Endothelial cell of umbilical vein (primary cell): ENCODE measurements at regions of chr20 and their contacts with region 1.

Region 1: DNA sequence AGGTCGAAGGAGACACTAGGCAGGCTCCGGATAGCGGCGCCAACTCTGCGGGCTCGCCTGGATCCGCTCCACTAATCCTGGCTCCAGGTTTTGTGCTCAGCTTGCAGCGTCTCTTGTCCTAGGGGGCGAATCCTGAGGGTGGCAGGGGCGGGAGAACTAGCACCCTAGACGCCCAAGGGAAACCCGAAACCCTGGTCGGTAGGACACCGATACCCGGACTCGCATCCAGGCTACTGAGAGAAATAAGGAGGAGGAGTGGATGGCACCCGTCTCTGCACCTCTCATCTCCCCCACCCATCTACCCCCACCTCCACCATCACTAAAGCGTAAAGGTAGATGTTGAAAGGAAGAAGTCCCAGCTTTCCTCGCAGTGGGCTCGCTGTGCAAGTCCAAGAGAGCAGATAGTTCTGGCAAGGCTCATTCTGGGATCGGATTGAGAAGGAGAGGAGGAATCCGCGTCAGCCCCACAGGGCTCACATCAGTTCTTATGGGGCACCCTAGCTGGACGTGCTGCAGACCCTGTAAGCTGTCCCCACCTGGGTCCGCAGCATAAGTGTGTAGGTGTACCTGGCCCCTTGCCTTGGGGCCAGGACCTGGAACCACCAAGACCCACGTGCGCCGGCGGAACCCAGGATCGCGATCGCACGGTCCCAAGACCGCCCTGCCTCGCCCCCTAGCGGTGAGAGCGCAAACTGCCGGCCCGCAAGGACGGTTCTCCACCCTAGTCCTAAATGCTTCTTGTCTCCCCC is 6.9 kb downstream of the SLC32A1 start:
- DNase-seq: peak; percentile 60
- H3K4me3 ChIP-seq: no peak overlapping the region
- H3K27ac ChIP-seq: no peak overlapping the region
- H3K4me1 ChIP-seq: peaks cover 6% of the 10 kb centered on the region
- H3K27me3 ChIP-seq: peaks cover 65 to 80% of the 10 kb centered on the region in 2 experiments
- CTCF ChIP-seq: peak; percentile 99
- POLR2A ChIP-seq: no peak

Region 2: GRCh38 chr20:38645980-38646858 is 84.9 kb before region 1 on chr20:
- CTCF ChIA-PET with region 1: interaction called, 18 read pairs
- POLR2A ChIA-PET with region 1: no interaction called
- dilution Hi-C with region 1: no loop called
- intact Hi-C with region 1: loop called (anchors 1 kb)
- DNase-seq: peak; percentile 64
- H3K4me3 ChIP-seq: peak overlapping the region in 1 of 3 experiments; percentile 14
- H3K27ac ChIP-seq: no peak overlapping the region
- H3K4me1 ChIP-seq: no peaks in the 10 kb centered on the region
- H3K27me3 ChIP-seq: peaks cover 20 to 21% of the 10 kb centered on the region in 2 experiments
- CTCF ChIP-seq: peak; percentile 94 to 97
- POLR2A ChIP-seq: no peak

Region 3: GRCh38 chr20:38748097-38748860 is 17.1 kb after region 1 on chr20 and contains the start of gene ACTR5:
- CTCF ChIA-PET with region 1: interaction called, 37 read pairs
- POLR2A ChIA-PET with region 1: no interaction called
- dilution Hi-C with region 1: no loop called
- intact Hi-C with region 1: loop called (anchors 1 kb)
- DNase-seq: peak; percentile 94
- H3K4me3 ChIP-seq: peak within 1 kb of the TSS; percentile 26 to 86 (median 77)
- H3K27ac ChIP-seq: peak within 1 kb of the TSS; percentile 46
- H3K4me1 ChIP-seq: peaks cover 6% of the 10 kb centered on the region
- H3K27me3 ChIP-seq: no peaks in the 10 kb centered on the region
- CTCF ChIP-seq: no peak
- POLR2A ChIP-seq: peak; percentile 80
- total RNA-seq, gene ACTR5: 9.7 and 11.3 TPM in 2 replicates

Region 4: DNA sequence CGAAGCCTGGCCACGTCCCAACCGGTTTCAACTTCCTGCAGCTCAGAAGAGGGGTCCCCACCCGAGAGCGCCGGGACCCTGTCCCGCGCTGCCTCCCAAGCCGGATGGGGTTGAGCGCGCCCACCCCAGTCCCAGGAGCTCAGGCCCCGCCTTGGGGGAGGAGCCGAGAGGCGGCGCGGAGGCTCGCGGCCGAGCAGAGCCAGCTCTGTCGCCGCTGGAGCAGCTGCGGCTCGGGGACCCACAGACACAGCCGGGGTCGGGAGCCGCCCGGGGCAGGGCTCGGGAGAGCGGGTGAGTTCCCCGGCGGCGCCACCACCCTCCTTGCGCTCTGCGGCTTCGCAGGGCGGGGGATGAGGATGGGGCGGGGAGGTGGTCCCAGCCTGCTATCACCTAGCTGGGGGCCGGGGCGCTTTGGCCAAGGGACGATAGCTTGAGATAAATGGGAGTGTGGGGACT is 74.4 kb after region 1 on chr20 and contains the start of gene PPP1R16B:
- CTCF ChIA-PET with region 1: interaction called, 3 read pairs
- POLR2A ChIA-PET with region 1: no interaction called
- dilution Hi-C with region 1: no loop called
- intact Hi-C with region 1: loop called (anchors 2 kb)
- DNase-seq: peak; percentile 72
- H3K4me3 ChIP-seq: peak within 1 kb of the TSS; percentile 57 to 87 (median 72)
- H3K27ac ChIP-seq: peak within 1 kb of the TSS; percentile 88
- H3K4me1 ChIP-seq: peaks cover 33% of the 10 kb centered on the region
- H3K27me3 ChIP-seq: no peaks in the 10 kb centered on the region
- CTCF ChIP-seq: no peak
- POLR2A ChIP-seq: peak; percentile 82
- total RNA-seq, gene PPP1R16B: 52.7 and 68.1 TPM in 2 replicates

Region 5: GRCh38 chr20:38893565-38894090 is 162.5 kb after region 1 on chr20:
- CTCF ChIA-PET with region 1: interaction called, 16 read pairs
- POLR2A ChIA-PET with region 1: no interaction called
- dilution Hi-C with region 1: no loop called
- intact Hi-C with region 1: loop called (anchors 1 kb)
- DNase-seq: peak; percentile 65
- H3K4me3 ChIP-seq: no peak overlapping the region
- H3K27ac ChIP-seq: no peak overlapping the region
- H3K4me1 ChIP-seq: peaks cover 5% of the 10 kb centered on the region
- H3K27me3 ChIP-seq: no peaks in the 10 kb centered on the region
- CTCF ChIP-seq: peak; percentile 86 to 99
- POLR2A ChIP-seq: no peak

Region 6: DNA sequence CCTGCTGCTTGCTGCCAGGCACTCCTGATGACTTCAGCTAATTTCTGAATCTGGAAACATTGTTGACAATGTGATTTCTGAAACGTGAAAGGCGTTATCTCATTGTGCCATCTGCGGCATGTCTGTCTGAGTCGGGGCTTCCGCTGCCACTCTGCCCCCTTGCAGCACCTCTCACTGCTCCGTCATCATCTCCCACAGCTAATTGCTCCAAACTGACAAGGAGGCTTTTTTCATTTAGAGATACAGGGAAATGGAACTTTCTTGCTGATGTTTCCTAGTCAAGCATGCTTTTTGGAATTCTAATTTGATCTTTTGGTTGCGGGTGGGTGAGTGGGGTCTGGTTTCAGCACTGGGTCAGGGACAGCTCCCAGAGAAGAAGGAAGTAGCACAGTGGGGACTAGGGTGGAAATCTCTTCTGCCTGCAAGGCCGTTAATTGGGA is 464.4 kb after region 1 on chr20:
- CTCF ChIA-PET with region 1: no interaction called
- POLR2A ChIA-PET with region 1: no interaction called
- dilution Hi-C with region 1: no loop called
- intact Hi-C with region 1: no loop called
- DNase-seq: no peak
- H3K4me3 ChIP-seq: no peak overlapping the region
- H3K27ac ChIP-seq: no peak overlapping the region
- H3K4me1 ChIP-seq: no peaks in the 10 kb centered on the region
- H3K27me3 ChIP-seq: no peaks in the 10 kb centered on the region
- CTCF ChIP-seq: no peak
- POLR2A ChIP-seq: no peak

Region 7: DNA sequence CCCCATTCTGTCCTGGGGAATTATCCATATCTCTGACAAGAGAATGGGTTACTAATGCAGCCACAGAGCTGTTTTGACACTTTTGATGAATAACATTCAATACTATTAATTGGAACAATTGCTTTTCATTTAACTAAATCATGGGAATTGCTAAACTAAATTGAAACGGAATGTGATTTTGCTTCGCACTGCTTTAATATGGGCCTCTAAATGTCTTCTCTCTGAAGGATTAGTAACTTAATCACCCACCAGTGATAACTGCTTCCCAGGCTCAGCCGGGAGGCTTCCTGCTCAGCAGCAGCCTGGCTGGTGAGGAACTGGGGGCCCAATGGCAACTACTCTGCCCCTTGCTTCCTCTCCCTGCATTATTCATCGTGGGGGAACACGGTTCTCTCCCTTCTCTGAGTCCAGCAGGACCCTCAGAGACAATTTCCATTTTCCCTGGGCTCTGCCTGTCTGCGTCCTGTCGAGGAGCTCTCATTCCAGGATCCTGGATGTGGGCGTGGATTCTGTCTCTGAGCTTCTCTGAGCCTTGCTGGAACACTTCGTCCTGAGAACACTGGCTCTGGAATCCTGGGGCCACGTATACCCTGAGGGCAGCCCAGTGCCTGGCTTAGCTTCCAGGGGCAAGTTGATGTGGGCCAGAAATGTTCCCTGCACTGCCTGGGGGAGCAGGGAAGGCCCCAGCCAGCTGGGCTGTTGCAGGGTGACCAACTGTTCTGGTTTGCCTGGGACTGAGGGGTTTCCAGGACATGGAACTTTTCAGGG is 539.9 kb after region 1 on chr20:
- CTCF ChIA-PET with region 1: no interaction called
- POLR2A ChIA-PET with region 1: no interaction called
- dilution Hi-C with region 1: no loop called
- intact Hi-C with region 1: no loop called
- DNase-seq: no peak
- H3K4me3 ChIP-seq: no peak overlapping the region
- H3K27ac ChIP-seq: no peak overlapping the region
- H3K4me1 ChIP-seq: peaks cover 4% of the 10 kb centered on the region
- H3K27me3 ChIP-seq: no peaks in the 10 kb centered on the region
- CTCF ChIP-seq: no peak
- POLR2A ChIP-seq: no peak